CD8-positive, alpha-beta T cell (primary cell): ENCODE measurements at regions of chr16 and their contacts with region 1.

Region 1: GRCh38 chr16:15643048-15643945 is at the start of gene MARF1:
- DNase-seq: peak; percentile 98 to 100 (median 100)
- ATAC-seq: peak; percentile 81
- H3K4me3 ChIP-seq: peak within 1 kb of the TSS; percentile 94 to 95
- H3K4me3 Mint-ChIP-seq: peak within 1 kb of the TSS; percentile 94
- H3K27ac ChIP-seq: peak within 1 kb of the TSS; percentile 98 to 100
- H3K27ac Mint-ChIP-seq: peak within 1 kb of the TSS; percentile 99
- H3K4me1 ChIP-seq: peaks cover 46% of the 10 kb centered on the region
- H3K4me1 Mint-ChIP-seq: peaks cover 47% of the 10 kb centered on the region
- H3K27me3 ChIP-seq: peaks cover 0 to 2% of the 10 kb centered on the region in 2 experiments
- H3K27me3 Mint-ChIP-seq: no peaks in the 10 kb centered on the region
- CTCF ChIP-seq: peak; percentile 26
- total RNA-seq, gene MARF1: 169 to 176 TPM

Region 2: GRCh38 chr16:14632692-14633569 is 1010.4 kb before region 1 on chr16 and contains the start of gene BFAR:
- CTCF ChIA-PET with region 1: no interaction called
- POLR2A ChIA-PET with region 1: no interaction called
- intact Hi-C with region 1: loop called in 1 of 2 experiments (anchors 2 kb)
- DNase-seq: peak; percentile 98 to 100 (median 99)
- ATAC-seq: peak; percentile 68
- H3K4me3 ChIP-seq: peak within 1 kb of the TSS; percentile 95 to 100
- H3K4me3 Mint-ChIP-seq: peak within 1 kb of the TSS; percentile 100
- H3K27ac ChIP-seq: peak within 1 kb of the TSS; percentile 82 to 94
- H3K27ac Mint-ChIP-seq: peak within 1 kb of the TSS; percentile 99
- H3K4me1 ChIP-seq: peaks cover 60% of the 10 kb centered on the region
- H3K4me1 Mint-ChIP-seq: peaks cover 73% of the 10 kb centered on the region
- H3K27me3 ChIP-seq: no peaks in the 10 kb centered on the region
- H3K27me3 Mint-ChIP-seq: no peaks in the 10 kb centered on the region
- CTCF ChIP-seq: no peak
- total RNA-seq, gene BFAR: 34.0 to 41.7 TPM

Region 3: DNA sequence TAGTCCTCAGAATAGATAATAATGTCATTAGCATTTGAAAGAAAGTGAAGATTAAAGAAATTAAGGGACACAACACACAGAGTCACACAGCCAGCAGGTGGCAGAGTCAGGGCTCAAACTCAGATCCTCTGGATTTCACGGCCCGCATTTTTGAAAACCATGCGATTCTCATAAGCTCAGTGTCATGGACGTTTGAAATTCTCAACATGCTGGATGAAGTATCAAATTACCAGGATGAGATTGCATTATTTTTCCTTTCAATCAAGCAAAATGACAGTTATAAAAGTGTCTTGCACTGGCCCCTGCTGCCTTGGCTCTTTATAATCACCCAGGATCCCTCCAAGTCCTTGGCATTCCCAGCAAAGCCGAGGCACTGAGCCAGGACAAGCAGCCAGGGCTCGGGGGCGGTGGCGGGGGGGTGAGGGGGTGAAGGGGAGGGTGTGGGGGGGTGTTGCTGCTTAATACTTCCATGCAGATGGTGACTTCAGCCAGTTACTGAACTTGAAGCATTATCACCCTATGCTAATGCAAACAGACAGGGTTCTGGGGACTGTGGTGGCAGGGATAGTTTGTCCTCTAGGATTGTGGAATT is 215.6 kb before region 1 on chr16:
- CTCF ChIA-PET with region 1: interaction called, 5 read pairs
- POLR2A ChIA-PET with region 1: interaction called, 5 read pairs
- intact Hi-C with region 1: loop called in 1 of 2 experiments (anchors 1 kb)
- DNase-seq: peak; percentile 12 to 71 (median 52)
- ATAC-seq: no peak
- H3K4me3 ChIP-seq: no peak overlapping the region
- H3K4me3 Mint-ChIP-seq: no peak overlapping the region
- H3K27ac ChIP-seq: no peak overlapping the region
- H3K27ac Mint-ChIP-seq: no peak overlapping the region
- H3K4me1 ChIP-seq: no peaks in the 10 kb centered on the region
- H3K4me1 Mint-ChIP-seq: peaks cover 2% of the 10 kb centered on the region
- H3K27me3 ChIP-seq: no peaks in the 10 kb centered on the region
- H3K27me3 Mint-ChIP-seq: peaks cover under 1% of the 10 kb centered on the region
- CTCF ChIP-seq: peak; percentile 63

Region 4: GRCh38 chr16:15592324-15592723 is 51.0 kb before region 1 on chr16:
- CTCF ChIA-PET with region 1: interaction called, 6 read pairs
- POLR2A ChIA-PET with region 1: interaction called, 10 read pairs
- intact Hi-C with region 1: loop called (anchors 1 kb)
- DNase-seq: peak in 8 of 9 experiments; percentile 19 to 71 (median 48)
- ATAC-seq: peak; percentile 5
- H3K4me3 ChIP-seq: no peak overlapping the region
- H3K4me3 Mint-ChIP-seq: no peak overlapping the region
- H3K27ac ChIP-seq: peak overlapping the region in 1 of 2 experiments; percentile 65
- H3K27ac Mint-ChIP-seq: peak overlapping the region; percentile 85
- H3K4me1 ChIP-seq: peaks cover 29% of the 10 kb centered on the region
- H3K4me1 Mint-ChIP-seq: peaks cover 35% of the 10 kb centered on the region
- H3K27me3 ChIP-seq: no peaks in the 10 kb centered on the region
- H3K27me3 Mint-ChIP-seq: no peaks in the 10 kb centered on the region
- CTCF ChIP-seq: no peak

Region 5: GRCh38 chr16:15672514-15673167 is 29.3 kb after region 1 on chr16:
- CTCF ChIA-PET with region 1: interaction called, 13 read pairs
- POLR2A ChIA-PET with region 1: interaction called, 27 read pairs
- intact Hi-C with region 1: loop called (anchors 1 to 2 kb)
- DNase-seq: peak; percentile 52 to 92 (median 77)
- ATAC-seq: peak; percentile 92
- H3K4me3 ChIP-seq: no peak overlapping the region
- H3K4me3 Mint-ChIP-seq: peak overlapping the region; percentile 66
- H3K27ac ChIP-seq: peak overlapping the region; percentile 87 to 93
- H3K27ac Mint-ChIP-seq: peak overlapping the region; percentile 92
- H3K4me1 ChIP-seq: peaks cover 36% of the 10 kb centered on the region
- H3K4me1 Mint-ChIP-seq: peaks cover 41% of the 10 kb centered on the region
- H3K27me3 ChIP-seq: no peaks in the 10 kb centered on the region
- H3K27me3 Mint-ChIP-seq: no peaks in the 10 kb centered on the region
- CTCF ChIP-seq: no peak

Region 6: GRCh38 chr16:15888072-15888976 is 245.0 kb after region 1 on chr16 and contains the start of gene CEP20:
- CTCF ChIA-PET with region 1: no interaction called
- POLR2A ChIA-PET with region 1: no interaction called
- intact Hi-C with region 1: loop called in 1 of 2 experiments (anchors 2 kb)
- DNase-seq: peak; percentile 99 to 100 (median 100)
- ATAC-seq: peak; percentile 97
- H3K4me3 ChIP-seq: peak within 1 kb of the TSS; percentile 85 to 100
- H3K4me3 Mint-ChIP-seq: peak within 1 kb of the TSS; percentile 100
- H3K27ac ChIP-seq: peak within 1 kb of the TSS; percentile 79 to 91
- H3K27ac Mint-ChIP-seq: peak within 1 kb of the TSS; percentile 98
- H3K4me1 ChIP-seq: peaks cover 23% of the 10 kb centered on the region
- H3K4me1 Mint-ChIP-seq: peaks cover 36% of the 10 kb centered on the region
- H3K27me3 ChIP-seq: no peaks in the 10 kb centered on the region
- H3K27me3 Mint-ChIP-seq: no peaks in the 10 kb centered on the region
- CTCF ChIP-seq: no peak
- total RNA-seq, gene CEP20: 12.5 to 13.6 TPM